ENCODE measurements at regions of chr14 and their contacts with region 1.

Region 1: GRCh38 chr14:56491299-56492285 is 88.0 kb upstream of the TMEM260 start:
- DNase-seq: peak in 7 of 9 experiments; percentile 16 to 62 (median 29)
- ATAC-seq: peak; percentile 68
- H3K4me3 ChIP-seq: no peak overlapping the region
- H3K4me3 Mint-ChIP-seq: peak overlapping the region; percentile 40
- H3K27ac ChIP-seq: no peak overlapping the region
- H3K27ac Mint-ChIP-seq: no peak overlapping the region
- H3K4me1 ChIP-seq: peaks cover 6% of the 10 kb centered on the region
- H3K4me1 Mint-ChIP-seq: peaks cover 13% of the 10 kb centered on the region
- H3K27me3 ChIP-seq: no peaks in the 10 kb centered on the region
- H3K27me3 Mint-ChIP-seq: no peaks in the 10 kb centered on the region
- CTCF ChIP-seq: peak; percentile 52

Region 2: DNA sequence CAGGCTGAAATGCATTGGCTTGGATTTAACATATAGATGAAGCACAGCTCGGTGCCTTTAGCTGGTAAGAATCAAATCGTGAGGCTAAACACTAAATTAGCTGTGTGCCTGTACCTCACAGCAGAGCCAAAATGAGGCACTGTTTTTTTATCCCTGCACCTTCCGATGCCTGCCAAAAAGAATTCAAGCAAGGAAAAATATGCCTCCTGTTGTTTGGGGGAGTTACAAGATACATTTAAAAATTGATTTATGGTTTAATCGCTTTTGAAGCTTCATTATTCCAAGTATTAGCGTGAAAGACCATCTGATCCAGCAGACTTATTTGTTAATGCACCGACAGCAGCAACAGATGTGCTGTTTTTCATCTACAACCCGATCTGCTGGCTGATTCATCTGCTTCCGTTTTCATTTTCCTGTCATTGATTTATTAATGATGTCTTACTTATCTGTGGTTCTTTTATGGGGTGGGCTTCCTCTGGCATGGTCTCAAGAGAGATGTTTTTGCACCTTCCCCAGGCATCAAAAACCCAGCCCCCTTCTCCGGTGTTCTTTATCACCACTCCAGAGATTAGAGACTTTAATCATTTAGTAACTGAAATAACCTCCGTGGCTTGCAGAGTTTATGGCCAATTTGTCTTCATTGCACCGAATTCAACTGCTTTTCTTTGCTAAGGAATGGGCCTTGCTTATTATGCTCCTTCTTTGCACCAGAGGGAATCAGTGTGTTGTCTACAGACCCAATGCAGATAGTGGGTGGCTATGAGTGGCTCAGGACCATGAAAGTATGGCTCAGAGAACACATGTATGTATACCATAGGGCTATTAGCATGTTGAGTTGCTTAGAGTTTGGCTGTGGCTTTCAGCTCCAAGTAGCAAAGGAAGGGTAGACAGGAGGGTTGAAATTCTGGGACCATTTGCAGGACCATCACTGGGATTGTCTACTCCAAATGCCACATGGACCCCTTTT is 78.8 kb before region 1 on chr14:
- CTCF ChIA-PET with region 1: no interaction called
- POLR2A ChIA-PET with region 1: no interaction called
- intact Hi-C with region 1: no loop called
- DNase-seq: no peak
- ATAC-seq: no peak
- H3K4me3 ChIP-seq: no peak overlapping the region
- H3K4me3 Mint-ChIP-seq: peak overlapping the region; percentile 71
- H3K27ac ChIP-seq: no peak overlapping the region
- H3K27ac Mint-ChIP-seq: no peak overlapping the region
- H3K4me1 ChIP-seq: no peaks in the 10 kb centered on the region
- H3K4me1 Mint-ChIP-seq: peaks cover 11% of the 10 kb centered on the region
- H3K27me3 ChIP-seq: no peaks in the 10 kb centered on the region
- H3K27me3 Mint-ChIP-seq: no peaks in the 10 kb centered on the region
- CTCF ChIP-seq: no peak

Region 3: GRCh38 chr14:56501909-56502530 is 10.4 kb after region 1 on chr14:
- CTCF ChIA-PET with region 1: interaction called, 12 read pairs
- POLR2A ChIA-PET with region 1: no interaction called
- intact Hi-C with region 1: no loop called
- DNase-seq: no peak
- ATAC-seq: no peak
- H3K4me3 ChIP-seq: no peak overlapping the region
- H3K4me3 Mint-ChIP-seq: no peak overlapping the region
- H3K27ac ChIP-seq: no peak overlapping the region
- H3K27ac Mint-ChIP-seq: no peak overlapping the region
- H3K4me1 ChIP-seq: no peaks in the 10 kb centered on the region
- H3K4me1 Mint-ChIP-seq: peaks cover 3% of the 10 kb centered on the region
- H3K27me3 ChIP-seq: no peaks in the 10 kb centered on the region
- H3K27me3 Mint-ChIP-seq: peaks cover 20% of the 10 kb centered on the region
- CTCF ChIP-seq: no peak

Region 4: DNA sequence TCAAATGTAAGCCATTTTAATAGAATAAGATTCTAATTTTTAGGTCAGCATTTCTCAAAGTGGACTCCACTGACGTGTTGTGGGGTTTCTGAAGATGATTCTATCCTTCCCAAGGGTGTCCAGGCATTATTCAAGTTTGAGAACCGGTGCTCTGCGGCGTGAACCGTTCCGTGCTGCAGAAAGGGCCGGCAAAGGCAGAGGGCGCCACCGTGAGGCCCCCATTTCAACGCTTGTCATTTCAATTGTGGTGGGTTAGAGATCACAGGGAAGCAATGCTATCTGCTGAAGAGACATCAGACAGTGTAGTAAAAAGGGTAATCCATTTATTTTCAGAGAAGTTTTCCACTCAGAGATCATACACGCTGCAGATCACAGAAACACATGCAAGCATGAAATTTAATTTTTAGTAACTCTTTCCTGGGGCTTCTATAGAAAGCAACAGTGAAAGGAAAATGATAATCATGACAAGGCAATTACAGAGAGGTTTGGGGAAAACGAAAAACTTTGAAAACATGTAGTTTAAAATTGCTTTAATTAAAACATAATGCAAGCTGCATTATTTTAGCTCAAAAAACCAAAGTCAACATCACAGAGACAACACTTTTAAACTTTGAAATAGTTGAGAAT is 575.4 kb after region 1 on chr14:
- CTCF ChIA-PET with region 1: no interaction called
- POLR2A ChIA-PET with region 1: no interaction called
- intact Hi-C with region 1: loop called in 1 of 2 experiments (anchors 2 kb)
- DNase-seq: peak in 2 of 9 experiments; percentile 2 to 11
- ATAC-seq: no peak
- H3K4me3 ChIP-seq: no peak overlapping the region
- H3K4me3 Mint-ChIP-seq: no peak overlapping the region
- H3K27ac ChIP-seq: no peak overlapping the region
- H3K27ac Mint-ChIP-seq: no peak overlapping the region
- H3K4me1 ChIP-seq: no peaks in the 10 kb centered on the region
- H3K4me1 Mint-ChIP-seq: no peaks in the 10 kb centered on the region
- H3K27me3 ChIP-seq: no peaks in the 10 kb centered on the region
- H3K27me3 Mint-ChIP-seq: peaks cover 26% of the 10 kb centered on the region
- CTCF ChIP-seq: no peak

Region 5: DNA sequence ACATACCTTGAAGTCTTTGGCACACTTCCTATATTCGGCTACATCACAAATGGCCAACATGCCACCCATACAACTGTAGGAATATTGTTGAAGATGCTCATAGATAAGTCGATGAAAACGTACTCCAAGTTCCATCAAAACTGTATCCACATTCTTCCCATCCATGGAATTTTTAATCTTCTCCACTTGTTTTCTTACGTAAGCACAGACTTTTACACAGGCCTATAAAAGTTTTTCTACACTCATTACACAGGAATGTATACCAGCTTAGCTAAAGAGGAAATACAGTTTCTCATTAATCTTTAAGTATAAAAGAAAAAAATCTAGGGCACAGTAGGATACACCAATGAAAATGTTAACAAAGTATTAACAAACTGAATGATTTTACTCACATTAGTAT is 718.0 kb after region 1 on chr14:
- CTCF ChIA-PET with region 1: interaction called, 4 read pairs
- POLR2A ChIA-PET with region 1: no interaction called
- intact Hi-C with region 1: loop called in 1 of 2 experiments (anchors 2 kb)
- DNase-seq: no peak
- ATAC-seq: no peak
- H3K4me3 ChIP-seq: no peak overlapping the region
- H3K4me3 Mint-ChIP-seq: no peak overlapping the region
- H3K27ac ChIP-seq: no peak overlapping the region
- H3K27ac Mint-ChIP-seq: no peak overlapping the region
- H3K4me1 ChIP-seq: no peaks in the 10 kb centered on the region
- H3K4me1 Mint-ChIP-seq: no peaks in the 10 kb centered on the region
- H3K27me3 ChIP-seq: no peaks in the 10 kb centered on the region
- H3K27me3 Mint-ChIP-seq: no peaks in the 10 kb centered on the region
- CTCF ChIP-seq: no peak

Region 6: DNA sequence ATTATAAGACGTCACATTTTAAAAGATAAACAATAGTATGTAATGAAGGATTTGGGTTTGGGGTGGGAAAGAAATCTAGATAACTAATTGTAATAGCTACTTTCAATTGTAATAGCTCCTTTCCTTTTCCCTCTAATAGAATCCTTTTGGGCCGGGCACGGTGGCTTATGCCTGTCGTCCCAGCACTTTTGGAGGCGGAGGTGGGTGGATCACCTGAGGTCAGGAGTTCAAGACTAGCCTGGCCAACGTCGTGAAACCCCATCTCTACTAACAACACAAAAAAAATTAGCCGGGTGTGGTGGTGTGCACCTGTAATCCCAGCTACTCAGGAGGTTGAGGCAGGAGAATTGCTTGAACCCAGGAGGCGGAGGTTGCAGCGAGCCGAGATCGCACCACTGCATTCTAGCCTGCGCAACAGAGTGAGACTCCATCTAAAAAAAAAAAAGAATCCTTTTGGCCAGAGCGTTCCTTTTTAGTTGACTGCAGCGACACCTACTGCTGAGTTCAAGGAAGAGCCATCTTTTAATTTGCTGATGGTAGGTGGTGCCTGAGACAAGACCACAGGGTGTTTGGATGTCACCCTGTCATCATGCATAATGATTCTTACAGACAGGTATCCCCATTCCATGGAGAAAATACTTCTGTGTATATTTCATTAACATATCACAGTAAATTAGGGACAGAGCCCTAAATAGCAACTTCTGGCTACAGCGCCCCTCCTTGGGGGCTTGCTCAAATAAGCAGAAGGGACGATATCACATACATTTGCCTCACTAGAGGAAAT is 1580.9 kb after region 1 on chr14:
- CTCF ChIA-PET with region 1: no interaction called
- POLR2A ChIA-PET with region 1: no interaction called
- intact Hi-C with region 1: loop called in 1 of 2 experiments (anchors 2 kb)
- DNase-seq: peak in 8 of 9 experiments; percentile 1 to 66 (median 27)
- ATAC-seq: peak; percentile 69
- H3K4me3 ChIP-seq: no peak overlapping the region
- H3K4me3 Mint-ChIP-seq: peak overlapping the region; percentile 16
- H3K27ac ChIP-seq: no peak overlapping the region
- H3K27ac Mint-ChIP-seq: no peak overlapping the region
- H3K4me1 ChIP-seq: no peaks in the 10 kb centered on the region
- H3K4me1 Mint-ChIP-seq: no peaks in the 10 kb centered on the region
- H3K27me3 ChIP-seq: no peaks in the 10 kb centered on the region
- H3K27me3 Mint-ChIP-seq: peaks cover 11% of the 10 kb centered on the region
- CTCF ChIP-seq: peak; percentile 56

Measured in CD8-positive, alpha-beta T cell (primary cell).